ENCODE measurements at regions of chr10 and their contacts with region 1.

Region 1: DNA sequence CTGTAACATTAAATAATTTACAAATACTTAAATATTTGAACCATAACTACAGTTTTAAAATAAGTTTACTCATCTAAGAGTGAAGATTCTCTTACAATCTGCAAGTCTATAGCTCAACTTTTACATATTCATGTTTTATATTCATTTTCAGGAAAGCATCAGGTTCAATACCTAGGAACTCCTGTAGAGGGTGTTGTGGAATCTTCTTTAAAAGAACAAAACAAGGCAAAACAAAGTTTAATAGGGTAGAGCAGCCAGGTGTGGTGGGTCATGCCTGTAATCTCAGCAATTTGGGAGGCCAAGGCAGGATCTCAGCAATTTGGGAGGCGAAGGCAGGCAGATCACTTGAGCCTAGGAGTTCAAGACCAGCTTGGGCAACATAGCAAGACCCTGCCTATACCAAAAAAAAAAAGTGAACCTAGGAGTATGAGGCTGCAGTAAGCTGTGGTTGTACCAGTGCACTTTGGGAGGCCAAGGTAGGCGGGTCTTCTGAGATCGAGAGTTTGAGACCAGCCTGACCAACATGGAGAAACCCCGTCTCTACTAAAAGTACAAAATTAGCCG is 45.1 kb downstream of the ST8SIA6 start:
- DNase-seq: peak in 4 of 5 donors; percentile 40 to 54 (median 51)
- H3K4me3 ChIP-seq: no peak overlapping the region
- H3K4me3 Mint-ChIP-seq: peak overlapping the region in 4 of 8 donors; percentile 1 to 42 (median 2)
- H3K27ac ChIP-seq: no peak overlapping the region
- H3K27ac Mint-ChIP-seq: peak overlapping the region in 6 of 7 donors; percentile 16 to 86 (median 42)
- H3K4me1 ChIP-seq: peaks cover 14% of the 10 kb centered on the region
- H3K4me1 Mint-ChIP-seq: peaks cover 15 to 27% (median 20%) of the 10 kb centered on the region in 4 donors
- H3K27me3 ChIP-seq: no peaks in the 10 kb centered on the region
- H3K27me3 Mint-ChIP-seq: peaks cover 0 to 3% of the 10 kb centered on the region in 2 donors

Region 2: DNA sequence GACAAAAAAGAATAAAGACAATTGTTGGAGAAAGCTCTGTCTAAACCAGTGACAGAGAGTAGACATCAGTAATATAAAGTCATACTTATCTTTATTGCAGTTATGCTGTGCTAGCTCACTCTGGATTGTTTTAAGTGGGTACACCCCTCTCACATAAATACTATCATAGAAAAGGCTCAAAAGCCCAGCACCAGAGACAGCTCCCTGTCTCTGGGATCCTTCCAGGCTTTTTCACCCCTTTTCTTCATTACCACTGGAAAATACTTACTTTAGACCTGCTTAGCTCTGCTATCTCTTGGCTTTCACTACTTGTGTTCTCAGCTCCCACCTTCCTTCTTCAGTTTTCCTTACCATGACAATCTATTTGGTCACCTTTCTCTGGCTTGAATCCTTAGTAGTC is 1289.8 kb before region 1 on chr10:
- CTCF ChIA-PET with region 1: no interaction called
- POLR2A ChIA-PET with region 1: no interaction called
- intact Hi-C with region 1: no loop called
- DNase-seq: no peak
- H3K4me3 ChIP-seq: no peak overlapping the region
- H3K4me3 Mint-ChIP-seq: no peak overlapping the region
- H3K27ac ChIP-seq: no peak overlapping the region
- H3K27ac Mint-ChIP-seq: no peak overlapping the region
- H3K4me1 ChIP-seq: no peaks in the 10 kb centered on the region
- H3K4me1 Mint-ChIP-seq: no peaks in the 10 kb centered on the region
- H3K27me3 ChIP-seq: no peaks in the 10 kb centered on the region
- H3K27me3 Mint-ChIP-seq: peaks cover 0 to 1% of the 10 kb centered on the region in 2 donors

Region 3: DNA sequence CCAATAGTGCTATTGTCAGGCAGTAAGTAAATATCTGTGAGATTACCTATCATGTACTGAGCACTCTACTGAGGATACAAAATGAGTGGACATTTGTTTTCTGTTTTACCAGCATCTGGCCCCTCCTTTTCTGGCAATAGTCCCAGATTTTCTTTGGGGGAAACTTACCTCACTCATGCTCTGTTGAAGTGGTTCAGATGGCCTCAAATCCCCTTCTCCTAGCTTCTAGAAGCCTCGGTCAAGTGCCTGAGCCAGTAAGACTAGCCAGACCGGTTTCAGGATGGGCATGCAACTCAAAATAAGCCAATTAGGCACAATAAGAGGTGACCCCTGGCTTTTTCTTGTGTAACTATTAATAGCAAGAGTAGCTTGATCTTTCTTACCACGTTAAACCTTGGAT is 227.5 kb before region 1 on chr10:
- CTCF ChIA-PET with region 1: no interaction called
- POLR2A ChIA-PET with region 1: no interaction called
- intact Hi-C with region 1: no loop called
- DNase-seq: no peak
- H3K4me3 ChIP-seq: no peak overlapping the region
- H3K4me3 Mint-ChIP-seq: no peak overlapping the region
- H3K27ac ChIP-seq: no peak overlapping the region
- H3K27ac Mint-ChIP-seq: no peak overlapping the region
- H3K4me1 ChIP-seq: no peaks in the 10 kb centered on the region
- H3K4me1 Mint-ChIP-seq: peaks cover 0 to 5% (median 2%) of the 10 kb centered on the region in 4 donors
- H3K27me3 ChIP-seq: no peaks in the 10 kb centered on the region
- H3K27me3 Mint-ChIP-seq: no peaks in the 10 kb centered on the region

Region 4: DNA sequence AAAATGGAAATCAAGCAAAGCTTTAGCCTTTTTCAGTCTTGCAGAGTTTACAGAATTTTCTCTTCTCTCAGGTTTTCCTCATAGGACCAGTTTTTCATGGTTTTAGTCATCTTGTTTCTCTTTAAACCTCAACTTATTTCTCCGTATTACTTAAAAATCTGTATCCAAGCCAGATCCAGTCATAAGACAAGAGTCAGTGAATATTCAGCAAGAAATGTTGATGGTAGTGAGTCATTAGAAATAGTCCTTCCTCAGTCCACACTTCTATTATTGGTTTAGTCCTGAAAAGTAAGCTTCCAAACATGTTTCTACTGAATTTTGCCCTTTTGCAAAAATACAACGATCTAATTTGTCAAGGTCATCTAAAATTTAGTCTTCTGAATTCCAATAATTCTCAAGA is 74.2 kb before region 1 on chr10:
- CTCF ChIA-PET with region 1: no interaction called
- POLR2A ChIA-PET with region 1: no interaction called
- intact Hi-C with region 1: no loop called
- DNase-seq: no peak
- H3K4me3 ChIP-seq: no peak overlapping the region
- H3K4me3 Mint-ChIP-seq: no peak overlapping the region
- H3K27ac ChIP-seq: no peak overlapping the region
- H3K27ac Mint-ChIP-seq: no peak overlapping the region
- H3K4me1 ChIP-seq: no peaks in the 10 kb centered on the region
- H3K4me1 Mint-ChIP-seq: peaks cover 0 to 2% (median 0%) of the 10 kb centered on the region in 4 donors
- H3K27me3 ChIP-seq: no peaks in the 10 kb centered on the region
- H3K27me3 Mint-ChIP-seq: peaks cover 1 to 22% of the 10 kb centered on the region in 2 donors

Region 5: GRCh38 chr10:17443707-17444387 is 34.6 kb after region 1 on chr10:
- CTCF ChIA-PET with region 1: interaction called, 11 read pairs
- POLR2A ChIA-PET with region 1: no interaction called
- intact Hi-C with region 1: loop called (anchors 5 kb)
- DNase-seq: peak in 2 of 5 donors; percentile 21 to 27
- H3K4me3 ChIP-seq: no peak overlapping the region
- H3K4me3 Mint-ChIP-seq: peak overlapping the region; percentile 21 to 67 (median 56)
- H3K27ac ChIP-seq: no peak overlapping the region
- H3K27ac Mint-ChIP-seq: peak overlapping the region in 6 of 7 donors; percentile 7 to 57 (median 18)
- H3K4me1 ChIP-seq: peaks cover 17% of the 10 kb centered on the region
- H3K4me1 Mint-ChIP-seq: peaks cover 9 to 16% (median 14%) of the 10 kb centered on the region in 4 donors
- H3K27me3 ChIP-seq: no peaks in the 10 kb centered on the region
- H3K27me3 Mint-ChIP-seq: peaks cover 5 to 15% of the 10 kb centered on the region in 2 donors

Region 6: GRCh38 chr10:17454161-17455014 is 45.1 kb after region 1 on chr10 and contains the start of gene ST8SIA6:
- CTCF ChIA-PET with region 1: interaction called, 11 read pairs
- POLR2A ChIA-PET with region 1: no interaction called
- intact Hi-C with region 1: no loop called
- DNase-seq: peak in 4 of 5 donors; percentile 41 to 59 (median 54)
- H3K4me3 ChIP-seq: peak within 1 kb of the TSS; percentile 27 to 56
- H3K4me3 Mint-ChIP-seq: peak within 1 kb of the TSS; percentile 87 to 95 (median 90)
- H3K27ac ChIP-seq: no peak within 1 kb of the TSS
- H3K27ac Mint-ChIP-seq: peak within 1 kb of the TSS in 6 of 7 donors; percentile 46 to 81 (median 71)
- H3K4me1 ChIP-seq: peaks cover 9% of the 10 kb centered on the region
- H3K4me1 Mint-ChIP-seq: peaks cover 13 to 34% (median 17%) of the 10 kb centered on the region in 4 donors
- H3K27me3 ChIP-seq: no peaks in the 10 kb centered on the region
- H3K27me3 Mint-ChIP-seq: peaks cover 1 to 2% of the 10 kb centered on the region in 2 donors
- total RNA-seq, gene ST8SIA6: 0.52 to 0.58 TPM